ENCODE measurements at regions of chr5 and their contacts with region 1.

Region 1: GRCh38 chr5:33701251-33701650 is 190.5 kb downstream of the ADAMTS12 start:
- DNase-seq: no peak
- ATAC-seq: no peak
- H3K4me3 ChIP-seq: no peak overlapping the region
- H3K27ac ChIP-seq: no peak overlapping the region
- H3K4me1 ChIP-seq: no peaks in the 10 kb centered on the region
- H3K27me3 ChIP-seq: no peaks in the 10 kb centered on the region
- CTCF ChIP-seq: no peak

Region 2: GRCh38 chr5:33457126-33457525 is 244.1 kb before region 1 on chr5:
- CTCF ChIA-PET with region 1: no interaction called
- POLR2A ChIA-PET with region 1: interaction called, 10 read pairs
- intact Hi-C with region 1: no loop called
- DNase-seq: no peak
- ATAC-seq: no peak
- H3K4me3 ChIP-seq: no peak overlapping the region
- H3K27ac ChIP-seq: no peak overlapping the region
- H3K4me1 ChIP-seq: no peaks in the 10 kb centered on the region
- H3K27me3 ChIP-seq: no peaks in the 10 kb centered on the region
- CTCF ChIP-seq: no peak

Measured in PC-3 (cell line).